Sciatic nerve (tissue), 2 donors: ENCODE measurements at regions of chr17 and their contacts with region 1.

Region 1: GRCh38 chr17:28908640-28909167 is 5.8 kb upstream of the DHRS13 start:
- DNase-seq: peak; percentile 71
- ATAC-seq: peak; percentile 84

Region 2: DNA sequence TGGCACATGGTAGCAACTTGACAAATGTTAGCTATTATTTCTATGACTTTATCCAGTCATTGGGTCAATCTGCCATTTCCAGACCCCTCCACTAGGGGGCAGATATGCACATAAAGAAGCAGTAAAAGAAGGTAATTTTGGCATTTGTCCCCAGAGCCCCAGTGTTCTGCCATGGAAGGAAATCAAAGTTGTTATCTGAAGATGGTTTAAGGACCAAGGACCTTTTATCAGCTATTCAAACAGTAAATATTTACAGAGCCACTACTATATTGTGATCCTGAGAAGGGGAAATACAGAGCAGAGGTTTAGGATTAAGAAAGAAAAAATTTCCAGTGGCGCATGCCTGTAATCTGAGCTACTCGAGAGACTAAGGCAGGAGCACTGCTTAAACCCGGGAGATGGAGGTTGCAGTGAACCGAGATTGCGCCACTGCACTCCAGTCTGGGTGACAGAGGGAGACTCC is 144.9 kb before region 1 on chr17:
- intact Hi-C with region 1: loop called (anchors 5 kb)
- DNase-seq: peak; percentile 88
- ATAC-seq: peak; percentile 62

Region 3: GRCh38 chr17:28878981-28879380 is 29.7 kb before region 1 on chr17:
- intact Hi-C with region 1: no loop called
- DNase-seq: no peak
- ATAC-seq: no peak